H1 (cell line): ENCODE measurements at regions of chr14 and their contacts with region 1.

Region 1: GRCh38 chr14:23494223-23494622 is 24.7 kb downstream of the NGDN start:
- DNase-seq: peak in 1 of 2 experiments; percentile 58
- H3K4me3 ChIP-seq: peak overlapping the region in 2 of 4 experiments; percentile 2 to 30; a peak in 3 of 8 replicates
- H3K27ac ChIP-seq: no peak overlapping the region; the same call in 1 of the 2 replicates
- H3K4me1 ChIP-seq: peaks cover 7 to 12% (median 8%) of the 10 kb centered on the region in 4 experiments
- H3K27me3 ChIP-seq: no peaks in the 10 kb centered on the region
- CTCF ChIP-seq: no peak
- EP300 ChIP-seq: no peak
- POLR2A ChIP-seq: 0 out of 3 replicates have a peak, but pooled peaks of 1 of the 2 experiments have one; percentile 39
- RAD21 ChIP-seq: no peak

Region 2: DNA sequence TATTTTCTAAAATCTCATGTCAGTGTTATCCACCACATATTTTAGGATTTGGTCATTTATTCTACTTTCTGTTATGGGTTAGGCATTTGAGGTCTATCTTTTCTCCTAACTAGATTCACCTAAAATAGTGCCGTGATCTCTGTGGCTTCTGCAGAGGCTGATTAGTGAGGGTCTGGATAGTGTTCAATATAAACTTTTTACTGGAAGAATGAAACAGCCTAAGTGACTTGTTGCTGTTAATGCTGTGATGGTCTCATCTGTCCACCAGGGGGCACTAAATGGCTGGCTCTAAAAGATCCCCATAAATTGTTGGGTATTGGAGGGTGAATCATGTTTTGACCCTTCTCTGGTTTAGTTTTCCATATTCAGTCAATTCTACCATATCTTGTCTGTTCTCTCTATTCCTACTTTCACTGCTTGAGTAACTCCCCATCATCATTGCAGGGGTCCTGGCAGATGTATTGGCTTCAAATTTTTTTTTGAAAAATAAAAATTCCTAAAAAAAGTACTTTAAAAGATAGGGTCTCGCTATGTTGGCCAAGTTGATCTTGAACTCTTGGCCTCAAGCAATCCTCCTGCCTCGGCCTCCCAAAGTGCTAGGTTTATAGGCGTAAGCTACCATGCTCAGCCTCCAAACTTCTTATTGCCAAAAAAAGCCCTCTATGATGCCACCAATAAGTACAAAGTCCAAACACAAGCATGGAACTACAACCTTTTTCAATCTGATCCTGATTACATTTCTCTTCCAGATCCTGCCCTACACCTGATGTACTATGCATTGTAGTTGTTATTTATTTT is 166.1 kb before region 1 on chr14:
- CTCF ChIA-PET with region 1: no interaction called
- POLR2A ChIA-PET with region 1: no interaction called
- DNase-seq: peak in 1 of 2 experiments; percentile 69
- H3K4me3 ChIP-seq: no peak overlapping the region
- H3K27ac ChIP-seq: no peak overlapping the region
- H3K4me1 ChIP-seq: no peaks in the 10 kb centered on the region
- H3K27me3 ChIP-seq: no peaks in the 10 kb centered on the region
- CTCF ChIP-seq: peak in 2 of 3 experiments; percentile 82 to 89; a peak in 3 of 4 replicates
- EP300 ChIP-seq: no peak
- POLR2A ChIP-seq: no peak; a peak in 1 of 3 replicates
- RAD21 ChIP-seq: peak; percentile 90 to 91

Region 3: GRCh38 chr14:23398348-23398747 is 95.9 kb before region 1 on chr14:
- CTCF ChIA-PET with region 1: no interaction called
- POLR2A ChIA-PET with region 1: no interaction called
- DNase-seq: no peak
- H3K4me3 ChIP-seq: no peak overlapping the region
- H3K27ac ChIP-seq: no peak overlapping the region
- H3K4me1 ChIP-seq: no peaks in the 10 kb centered on the region
- H3K27me3 ChIP-seq: no peaks in the 10 kb centered on the region; a peak in 1 of 7 replicates
- CTCF ChIP-seq: no peak
- EP300 ChIP-seq: no peak
- POLR2A ChIP-seq: no peak
- RAD21 ChIP-seq: no peak

Region 4: GRCh38 chr14:23446291-23446851 is 47.9 kb before region 1 on chr14:
- CTCF ChIA-PET with region 1: no interaction called
- POLR2A ChIA-PET with region 1: no interaction called
- DNase-seq: no peak
- H3K4me3 ChIP-seq: no peak overlapping the region
- H3K27ac ChIP-seq: no peak overlapping the region
- H3K4me1 ChIP-seq: peaks cover 2 to 12% (median 9%) of the 10 kb centered on the region in 4 experiments
- H3K27me3 ChIP-seq: no peaks in the 10 kb centered on the region; a peak in 2 of 7 replicates
- CTCF ChIP-seq: peak in 2 of 3 experiments; percentile 12 to 27; a peak in 2 of 4 replicates
- EP300 ChIP-seq: no peak
- POLR2A ChIP-seq: no peak
- RAD21 ChIP-seq: peak; percentile 38 to 56; a peak in 3 of 4 replicates

Region 5: GRCh38 chr14:23478111-23478759 is 16.0 kb before region 1 on chr14:
- CTCF ChIA-PET with region 1: interaction called, 79 read pairs
- POLR2A ChIA-PET with region 1: interaction called, 32 read pairs
- DNase-seq: peak in 1 of 2 experiments; percentile 56
- H3K4me3 ChIP-seq: no peak overlapping the region
- H3K27ac ChIP-seq: no peak overlapping the region
- H3K4me1 ChIP-seq: peaks cover 2 to 15% (median 12%) of the 10 kb centered on the region in 4 experiments; a peak in 5 of 7 replicates
- H3K27me3 ChIP-seq: no peaks in the 10 kb centered on the region
- CTCF ChIP-seq: peak in 2 of 3 experiments; percentile 63 to 70; a peak in 3 of 4 replicates
- EP300 ChIP-seq: no peak
- POLR2A ChIP-seq: no peak
- RAD21 ChIP-seq: peak; percentile 82 to 85

Region 6: GRCh38 chr14:23483236-23483854 is 10.9 kb before region 1 on chr14:
- CTCF ChIA-PET with region 1: interaction called, 79 read pairs
- POLR2A ChIA-PET with region 1: interaction called, 32 read pairs
- DNase-seq: peak in 1 of 2 experiments; percentile 71
- H3K4me3 ChIP-seq: peak overlapping the region in 1 of 4 experiments; percentile 35; a peak in 1 of 8 replicates
- H3K27ac ChIP-seq: peak overlapping the region; percentile 63; the same call in 1 of the 2 replicates
- H3K4me1 ChIP-seq: peaks cover 14 to 46% (median 36%) of the 10 kb centered on the region in 4 experiments
- H3K27me3 ChIP-seq: peaks cover 0 to 1% (median 0%) of the 10 kb centered on the region in 4 experiments; a peak in 1 of 7 replicates
- CTCF ChIP-seq: peak; percentile 94 to 98 (median 94)
- EP300 ChIP-seq: peak in 1 of 2 experiments; percentile 7; a peak in 1 of 3 replicates
- POLR2A ChIP-seq: 0 out of 3 replicates have a peak, but pooled peaks of 1 of the 2 experiments have one; percentile 5
- RAD21 ChIP-seq: peak; percentile 93 to 96

Region 7: GRCh38 chr14:23528555-23528954 is 34.3 kb after region 1 on chr14:
- CTCF ChIA-PET with region 1: interaction called, 2,092 read pairs
- POLR2A ChIA-PET with region 1: interaction called, 6 read pairs
- DNase-seq: no peak
- H3K4me3 ChIP-seq: no peak overlapping the region
- H3K27ac ChIP-seq: no peak overlapping the region
- H3K4me1 ChIP-seq: peaks cover 0 to 3% (median 1%) of the 10 kb centered on the region in 4 experiments; a peak in 3 of 7 replicates
- H3K27me3 ChIP-seq: no peaks in the 10 kb centered on the region
- CTCF ChIP-seq: peak; percentile 38 to 50 (median 48)
- EP300 ChIP-seq: no peak
- POLR2A ChIP-seq: no peak
- RAD21 ChIP-seq: peak; percentile 34 to 50; a peak in 3 of 4 replicates

Region 8: GRCh38 chr14:23539248-23540140 is 45.3 kb after region 1 on chr14:
- CTCF ChIA-PET with region 1: interaction called, 2,092 read pairs
- POLR2A ChIA-PET with region 1: interaction called, 944 read pairs
- DNase-seq: peak in 1 of 2 experiments; percentile 79
- H3K4me3 ChIP-seq: peak overlapping the region; percentile 42 to 72 (median 58); a peak in 7 of 8 replicates
- H3K27ac ChIP-seq: peak overlapping the region; percentile 97
- H3K4me1 ChIP-seq: peaks cover 9 to 25% (median 18%) of the 10 kb centered on the region in 4 experiments
- H3K27me3 ChIP-seq: no peaks in the 10 kb centered on the region
- CTCF ChIP-seq: peak; percentile 52 to 92 (median 85)
- EP300 ChIP-seq: peak in 1 of 2 experiments; percentile 59; a peak in 1 of 3 replicates
- POLR2A ChIP-seq: peak; percentile 76 to 83
- RAD21 ChIP-seq: peak; percentile 73 to 87

Region 9: GRCh38 chr14:23629832-23630396 is 135.7 kb after region 1 on chr14:
- CTCF ChIA-PET with region 1: no interaction called
- POLR2A ChIA-PET with region 1: no interaction called
- DNase-seq: no peak
- H3K4me3 ChIP-seq: no peak overlapping the region
- H3K27ac ChIP-seq: no peak overlapping the region
- H3K4me1 ChIP-seq: no peaks in the 10 kb centered on the region; a peak in 1 of 7 replicates
- H3K27me3 ChIP-seq: no peaks in the 10 kb centered on the region
- CTCF ChIP-seq: no peak
- EP300 ChIP-seq: no peak
- POLR2A ChIP-seq: no peak
- RAD21 ChIP-seq: no peak